AG04450 (cell line): ENCODE measurements at regions of chr2 and their contacts with region 1.

Region 1: DNA sequence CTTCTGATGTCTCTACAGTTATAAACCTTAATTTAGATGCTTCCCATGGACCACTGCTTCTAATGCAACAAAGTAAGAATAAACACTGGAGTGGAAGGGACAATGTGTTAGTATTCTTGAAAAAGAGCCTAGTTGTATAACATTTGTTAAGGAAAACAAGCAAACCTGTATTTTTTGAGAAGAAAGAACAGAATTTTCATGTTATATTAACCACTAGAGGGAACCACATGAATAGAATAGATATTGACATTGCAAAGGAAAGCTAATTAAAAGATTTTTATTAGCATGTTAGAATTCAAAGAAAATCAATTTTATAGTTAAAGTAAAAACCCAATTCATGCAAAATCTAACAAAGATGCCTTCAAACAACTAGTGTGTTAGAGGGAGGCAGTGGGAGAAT is 151.2 kb upstream of the BARD1 start:
- DNase-seq: no peak
- H3K4me3 ChIP-seq: no peak overlapping the region
- H3K27ac ChIP-seq: no peak overlapping the region
- H3K27me3 ChIP-seq: no peaks in the 10 kb centered on the region
- CTCF ChIP-seq: peak; percentile 37

Region 2: GRCh38 chr2:215931256-215931903 is 970.7 kb after region 1 on chr2:
- CTCF ChIA-PET with region 1: interaction called, 10 read pairs
- POLR2A ChIA-PET with region 1: no interaction called
- DNase-seq: peak; percentile 38
- H3K4me3 ChIP-seq: no peak overlapping the region
- H3K27ac ChIP-seq: no peak overlapping the region
- H3K27me3 ChIP-seq: no peaks in the 10 kb centered on the region
- CTCF ChIP-seq: peak; percentile 98